ENCODE measurements at regions of chr10 and their contacts with region 1.

Region 1: DNA sequence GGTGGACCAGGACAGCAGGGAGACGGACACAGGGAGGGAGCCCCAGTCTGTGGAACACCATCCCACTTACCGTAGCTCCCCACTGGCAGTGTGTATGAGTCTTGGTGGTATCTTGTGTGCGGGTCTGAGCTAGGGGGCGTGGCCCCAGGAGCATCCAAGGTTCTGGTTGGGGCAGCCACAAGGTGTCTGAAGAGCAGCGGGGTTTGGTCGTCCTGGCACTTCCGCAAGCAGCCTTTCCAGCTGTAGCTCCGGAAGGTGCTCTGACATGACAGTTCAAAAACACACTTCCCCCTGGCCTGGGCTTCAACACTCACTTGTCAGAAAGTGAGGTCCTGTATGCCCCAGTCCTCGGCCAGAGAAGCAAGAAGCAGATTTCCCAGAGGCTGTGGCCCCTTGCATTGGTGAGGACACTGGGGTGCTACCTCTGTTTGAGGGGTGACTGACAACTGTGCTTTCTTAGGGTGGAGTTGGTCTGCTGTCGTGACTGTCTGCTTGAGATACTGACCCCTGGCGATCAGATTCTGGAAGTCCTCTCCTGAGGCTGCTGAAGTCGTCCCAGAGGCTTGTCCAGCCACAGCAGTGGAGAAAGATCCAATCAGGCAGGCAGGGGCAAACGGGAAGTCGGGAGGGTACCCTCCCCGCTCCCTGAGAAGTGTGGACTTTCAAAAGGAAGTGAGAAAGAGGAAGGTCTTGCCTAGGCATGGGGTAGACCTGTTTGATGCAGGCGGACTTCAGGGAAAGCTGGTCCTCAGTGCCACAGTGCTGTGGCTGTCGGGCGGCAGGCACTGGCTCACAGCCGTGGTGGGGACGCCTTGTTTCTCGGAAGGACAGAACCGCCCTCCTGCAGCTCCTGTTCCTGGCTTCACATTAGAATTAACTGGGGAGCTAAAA is 51.4 kb upstream of the PFKFB3 start:
- DNase-seq: peak in 4 of 5 donors; percentile 63 to 79 (median 70)
- ATAC-seq: peak; percentile 68 to 83 (median 82)
- H3K4me3 ChIP-seq: peak overlapping the region in 3 of 12 donors; percentile 1 to 34 (median 13)
- H3K27ac ChIP-seq: peak overlapping the region in 10 of 12 donors; percentile 2 to 89 (median 31)
- H3K4me1 ChIP-seq: peaks cover 0 to 59% (median 8%) of the 10 kb centered on the region in 12 donors
- H3K27me3 ChIP-seq: no peaks in the 10 kb centered on the region
- CTCF ChIP-seq: peak; percentile 47 to 78 (median 62)
- POLR2A ChIP-seq: no peak

Region 2: GRCh38 chr10:6023661-6024333 is 127.5 kb before region 1 on chr10:
- intact Hi-C with region 1: no loop called
- DNase-seq: no peak
- ATAC-seq: no peak
- H3K4me3 ChIP-seq: no peak overlapping the region
- H3K27ac ChIP-seq: no peak overlapping the region
- H3K4me1 ChIP-seq: peaks cover 0 to 6% (median 0%) of the 10 kb centered on the region in 12 donors
- H3K27me3 ChIP-seq: no peaks in the 10 kb centered on the region
- CTCF ChIP-seq: no peak
- POLR2A ChIP-seq: no peak

Region 3: DNA sequence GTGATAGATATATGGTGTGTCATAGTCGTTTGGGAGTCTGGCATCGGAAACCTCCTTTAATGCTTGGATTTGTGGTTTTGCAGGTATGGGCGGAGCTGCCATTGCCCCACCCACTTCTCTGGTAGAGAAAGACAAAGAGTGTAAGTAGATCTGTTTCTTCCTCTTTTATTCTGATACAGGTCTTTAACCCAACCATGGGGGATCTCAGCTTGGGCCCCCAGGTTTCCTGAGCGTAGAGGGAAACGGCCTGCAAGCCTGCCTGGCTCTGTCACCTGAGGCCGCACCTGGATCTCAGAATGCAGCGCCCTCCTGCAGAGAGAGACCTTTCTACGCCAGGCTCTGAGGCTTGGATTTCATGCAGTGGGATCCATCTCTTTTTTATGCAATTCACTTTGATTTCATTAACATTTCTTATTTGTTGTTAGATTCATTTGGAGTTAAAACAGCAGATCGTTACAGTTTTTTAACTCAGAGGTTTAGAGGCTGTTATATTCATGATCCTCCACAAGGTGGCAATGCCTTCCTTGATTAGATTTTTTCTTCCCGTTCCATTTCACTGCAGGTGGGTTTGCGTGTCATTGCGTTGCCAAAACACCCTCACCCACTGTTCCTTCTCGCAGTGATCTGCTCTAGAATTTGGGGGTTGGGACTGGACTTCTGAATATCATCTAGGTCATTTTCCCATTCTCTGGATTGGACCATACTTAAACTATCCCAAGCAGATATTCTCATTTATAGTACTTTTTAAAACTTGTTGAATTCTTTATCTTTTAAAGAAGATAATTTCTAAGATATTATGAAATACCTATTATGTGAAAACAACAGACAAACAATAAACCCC is 42.5 kb before region 1 on chr10:
- intact Hi-C with region 1: loop called in 9 of 10 experiments (anchors 2 to 5 kb)
- DNase-seq: no peak
- ATAC-seq: peak in 2 of 4 donors; percentile 29 to 45
- H3K4me3 ChIP-seq: no peak overlapping the region
- H3K27ac ChIP-seq: no peak overlapping the region
- H3K4me1 ChIP-seq: peaks cover 0 to 24% (median 0%) of the 10 kb centered on the region in 12 donors
- H3K27me3 ChIP-seq: no peaks in the 10 kb centered on the region
- CTCF ChIP-seq: peak; percentile 58 to 81 (median 74)
- POLR2A ChIP-seq: no peak

Region 4: DNA sequence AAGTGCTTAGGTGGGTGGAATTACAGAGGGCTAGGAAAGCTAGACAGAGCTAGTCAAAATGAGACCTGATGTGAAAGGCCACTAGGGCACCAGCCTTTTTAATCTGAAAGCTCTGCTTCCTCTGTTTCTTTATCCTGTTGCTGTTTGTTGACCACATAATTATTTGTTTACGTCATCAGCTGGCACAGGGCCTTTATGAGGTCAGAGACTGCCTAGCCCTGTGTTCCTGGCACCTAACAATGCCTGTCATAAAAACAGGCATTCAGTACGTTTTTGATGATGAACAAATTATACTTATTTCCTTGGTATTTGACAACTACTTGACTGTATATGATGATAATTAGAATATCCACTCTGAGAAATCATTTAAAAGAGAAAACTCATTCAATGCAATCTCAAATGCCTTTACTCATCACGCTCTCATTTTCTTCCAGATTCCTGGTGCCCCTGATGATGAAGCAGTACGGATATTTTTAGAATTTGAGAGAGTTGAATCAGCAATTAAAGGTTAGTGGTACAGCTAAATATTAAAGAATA is 36.5 kb before region 1 on chr10:
- intact Hi-C with region 1: loop called in 5 of 10 experiments (anchors 5 kb)
- DNase-seq: peak in 1 of 5 donors; percentile 48
- ATAC-seq: peak; percentile 40 to 62 (median 50)
- H3K4me3 ChIP-seq: no peak overlapping the region
- H3K27ac ChIP-seq: peak overlapping the region in 11 of 12 donors; percentile 17 to 71 (median 57)
- H3K4me1 ChIP-seq: peaks cover 0 to 42% (median 13%) of the 10 kb centered on the region in 12 donors
- H3K27me3 ChIP-seq: no peaks in the 10 kb centered on the region
- CTCF ChIP-seq: peak in 1 of 12 donors; percentile 5
- POLR2A ChIP-seq: no peak

Measured in heart left ventricle (tissue), 16 donors.